ENCODE measurements at regions of chr19 and their contacts with region 1.

Region 1: DNA sequence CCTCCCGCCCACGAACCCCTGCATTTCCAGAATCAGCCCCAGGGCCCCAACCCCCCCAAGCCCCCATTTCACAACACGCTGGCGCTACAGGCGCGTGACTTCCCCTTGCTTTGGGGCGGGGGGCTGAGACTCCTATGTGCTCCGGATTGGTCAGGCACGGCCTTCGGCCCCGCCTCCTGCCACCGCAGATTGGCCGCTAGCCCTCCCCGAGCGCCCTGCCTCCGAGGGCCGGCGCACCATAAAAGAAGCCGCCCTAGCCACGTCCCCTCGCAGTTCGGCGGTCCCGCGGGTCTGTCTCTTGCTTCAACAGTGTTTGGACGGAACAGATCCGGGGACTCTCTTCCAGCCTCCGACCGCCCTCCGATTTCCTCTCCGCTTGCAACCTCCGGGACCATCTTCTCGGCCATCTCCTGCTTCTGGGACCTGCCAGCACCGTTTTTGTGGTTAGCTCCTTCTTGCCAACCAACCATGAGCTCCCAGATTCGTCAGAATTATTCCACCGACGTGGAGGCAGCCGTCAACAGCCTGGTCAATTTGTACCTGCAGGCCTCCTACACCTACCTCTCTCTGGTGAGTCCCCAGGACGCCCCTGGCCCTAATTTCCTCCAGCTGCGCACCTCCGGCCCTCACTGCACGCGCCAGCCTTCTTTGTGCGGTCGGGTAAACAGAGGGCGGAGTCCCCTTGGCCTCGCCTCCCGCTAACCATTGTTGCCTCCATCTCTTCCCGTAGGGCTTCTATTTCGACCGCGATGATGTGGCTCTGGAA is at the start of gene FTL:
- H3K4me3 Mint-ChIP-seq: peak within 1 kb of the TSS; percentile 100
- H3K27ac Mint-ChIP-seq: peak within 1 kb of the TSS; percentile 98
- H3K4me1 Mint-ChIP-seq: peaks cover 72% of the 10 kb centered on the region
- H3K27me3 Mint-ChIP-seq: no peaks in the 10 kb centered on the region

Region 2: DNA sequence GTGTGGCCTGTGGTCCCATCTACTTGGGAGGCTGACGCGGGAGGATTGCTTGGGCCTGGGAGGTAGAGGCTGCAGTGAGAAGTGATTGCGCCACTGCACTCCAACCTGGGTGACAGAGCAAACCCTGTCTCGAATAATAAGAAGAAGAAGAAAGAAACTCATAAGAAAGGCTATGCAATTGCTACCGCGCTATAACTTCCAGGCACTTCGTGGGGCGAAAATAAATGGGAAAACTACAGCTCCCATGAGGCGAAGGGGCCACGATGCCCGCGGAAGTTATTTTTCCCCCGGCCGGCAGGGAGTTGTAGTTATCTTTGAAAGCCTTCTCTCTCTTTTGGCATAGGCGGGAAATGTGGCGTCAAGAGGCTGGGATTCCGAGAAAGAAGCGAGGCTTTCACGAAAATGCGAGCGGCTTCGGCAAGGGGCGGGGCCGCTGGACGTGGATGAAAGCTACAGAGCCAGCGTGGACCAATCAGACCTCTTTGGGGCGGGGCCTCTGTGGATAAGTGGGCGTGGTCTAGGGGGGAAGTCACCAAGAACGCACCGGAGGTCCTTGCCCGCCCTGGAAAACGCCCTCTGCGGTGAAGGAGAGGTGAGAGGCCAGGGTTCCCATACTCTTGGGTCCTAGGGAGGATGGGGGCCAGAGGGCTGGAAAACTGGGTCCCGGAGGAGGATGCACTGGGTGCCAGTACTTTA is 65.3 kb before region 1 on chr19 and contains the start of gene NUCB1:
- intact Hi-C with region 1: loop called (anchors 1 kb)
- H3K4me3 Mint-ChIP-seq: peak within 1 kb of the TSS; percentile 100
- H3K27ac Mint-ChIP-seq: peak within 1 kb of the TSS; percentile 99
- H3K4me1 Mint-ChIP-seq: peaks cover 51% of the 10 kb centered on the region
- H3K27me3 Mint-ChIP-seq: peaks cover 28% of the 10 kb centered on the region